Esophagus squamous epithelium (tissue), 5 donors: ENCODE measurements at regions of chr2 and their contacts with region 1.

Region 1: DNA sequence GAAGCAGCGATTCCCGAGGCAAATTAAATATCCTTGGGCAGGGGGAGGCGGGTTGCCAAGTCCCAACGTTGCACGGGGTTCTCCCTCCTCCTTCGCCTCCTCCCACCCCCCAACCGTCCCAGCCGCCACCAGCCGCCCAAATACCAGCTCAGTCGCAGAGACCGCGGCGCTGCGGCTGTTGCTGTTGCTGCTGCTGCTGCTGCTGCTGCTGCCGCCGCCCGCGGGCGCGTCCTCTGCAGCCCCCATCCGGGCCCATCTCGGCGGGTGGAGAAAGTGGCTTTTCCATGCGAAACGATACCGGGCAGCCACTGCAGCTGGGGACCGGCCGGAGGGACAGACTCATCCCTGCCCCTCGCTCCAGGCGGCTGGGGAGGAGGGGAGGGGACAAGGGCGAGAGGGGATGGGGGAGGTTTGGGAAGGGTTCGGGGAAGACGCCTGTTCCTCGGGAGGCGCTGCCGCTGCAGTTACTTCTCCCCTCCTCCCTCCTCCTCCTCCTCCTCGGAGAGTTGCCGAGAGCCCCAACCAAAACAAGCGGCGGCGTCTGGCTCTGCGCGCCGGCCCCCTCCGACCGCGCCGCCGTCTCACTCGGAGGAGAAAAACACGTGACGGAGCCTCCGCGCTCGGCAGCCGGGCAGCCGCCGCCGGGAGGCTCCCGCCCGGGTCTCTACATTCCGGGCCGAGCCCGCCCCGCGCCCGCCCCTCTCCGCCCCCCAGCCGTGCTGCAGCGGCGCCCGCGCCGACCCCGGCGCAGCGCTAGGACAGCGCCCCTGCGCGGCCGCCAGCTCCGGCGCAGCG is at the start of gene IRS1:
- DNase-seq: no peak
- H3K4me3 ChIP-seq: peak within 1 kb of the TSS; percentile 63 to 78 (median 68)
- H3K27ac ChIP-seq: peak within 1 kb of the TSS; percentile 85 to 97 (median 96)
- H3K4me1 ChIP-seq: peaks cover 23 to 78% (median 29%) of the 10 kb centered on the region in 3 donors
- H3K27me3 ChIP-seq: peaks cover 0 to 59% (median 0%) of the 10 kb centered on the region in 4 donors
- CTCF ChIP-seq: peak in 2 of 6 experiments; percentile 34 to 44
- POLR2A ChIP-seq: peak in 2 of 4 donors; percentile 53 to 63
- total RNA-seq, gene IRS1: 3.5 to 20.5 (median 14.2) TPM

Region 2: GRCh38 chr2:225894240-225894980 is 905.0 kb before region 1 on chr2:
- intact Hi-C with region 1: loop called (anchors 5 kb)
- DNase-seq: no peak
- H3K4me3 ChIP-seq: no peak overlapping the region
- H3K27ac ChIP-seq: no peak overlapping the region
- H3K4me1 ChIP-seq: no peaks in the 10 kb centered on the region
- H3K27me3 ChIP-seq: no peaks in the 10 kb centered on the region
- CTCF ChIP-seq: no peak
- POLR2A ChIP-seq: no peak

Region 3: GRCh38 chr2:226227359-226227758 is 572.0 kb before region 1 on chr2:
- intact Hi-C with region 1: no loop called
- DNase-seq: no peak
- H3K4me3 ChIP-seq: no peak overlapping the region
- H3K27ac ChIP-seq: no peak overlapping the region
- H3K4me1 ChIP-seq: no peaks in the 10 kb centered on the region
- H3K27me3 ChIP-seq: no peaks in the 10 kb centered on the region
- CTCF ChIP-seq: no peak
- POLR2A ChIP-seq: no peak

Region 4: GRCh38 chr2:226862623-226863022 is 63.2 kb after region 1 on chr2:
- intact Hi-C with region 1: no loop called
- DNase-seq: no peak
- H3K4me3 ChIP-seq: no peak overlapping the region
- H3K27ac ChIP-seq: no peak overlapping the region
- H3K4me1 ChIP-seq: no peaks in the 10 kb centered on the region
- H3K27me3 ChIP-seq: no peaks in the 10 kb centered on the region
- CTCF ChIP-seq: no peak
- POLR2A ChIP-seq: no peak

Region 5: GRCh38 chr2:226984750-226985582 is 185.6 kb after region 1 on chr2:
- intact Hi-C with region 1: loop called (anchors 10 kb)
- DNase-seq: no peak
- H3K4me3 ChIP-seq: no peak overlapping the region
- H3K27ac ChIP-seq: peak overlapping the region in 1 of 4 donors; percentile 19
- H3K4me1 ChIP-seq: peaks cover 0 to 14% (median 3%) of the 10 kb centered on the region in 3 donors
- H3K27me3 ChIP-seq: no peaks in the 10 kb centered on the region
- CTCF ChIP-seq: peak; percentile 50 to 75 (median 68)
- POLR2A ChIP-seq: no peak